Esophagus muscularis mucosa (tissue), 4 donors: ENCODE measurements at regions of chr13 and their contacts with region 1.

Region 1: GRCh38 chr13:59906413-59907049 is 257.2 kb downstream of the DIAPH3 start:
- DNase-seq: no peak
- H3K4me3 ChIP-seq: no peak overlapping the region
- H3K27ac ChIP-seq: no peak overlapping the region
- H3K4me1 ChIP-seq: no peaks in the 10 kb centered on the region
- H3K27me3 ChIP-seq: no peaks in the 10 kb centered on the region
- CTCF ChIP-seq: peak; percentile 48 to 61 (median 57)
- EP300 ChIP-seq: no peak
- POLR2A ChIP-seq: no peak

Region 2: DNA sequence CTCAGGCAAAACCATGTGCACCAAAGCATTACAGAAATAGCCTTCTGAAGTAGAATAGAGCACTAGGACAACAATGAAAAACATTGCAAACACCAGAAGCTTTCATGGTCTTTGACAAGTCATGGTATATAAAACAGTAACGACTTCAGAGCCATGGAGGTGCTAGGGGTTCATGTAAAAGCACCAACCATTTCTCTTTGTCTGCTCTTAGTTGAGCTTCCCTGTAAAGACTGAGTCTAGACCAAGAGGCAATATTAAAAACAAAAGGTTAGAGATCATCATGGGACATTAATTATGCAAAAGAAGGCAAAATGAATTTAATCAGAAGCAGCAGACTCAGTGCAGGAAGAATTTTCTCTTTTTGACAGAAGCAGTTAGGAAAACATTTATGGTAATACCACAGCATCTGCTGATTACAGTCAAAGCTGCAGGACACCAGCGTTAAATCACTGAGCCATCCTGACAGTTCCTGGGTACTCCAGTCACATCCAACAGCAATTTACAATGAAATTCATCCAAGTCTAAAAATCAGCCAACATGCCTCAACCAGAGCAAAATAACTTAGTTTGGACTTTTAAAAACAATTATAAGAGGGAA is 219.6 kb before region 1 on chr13:
- intact Hi-C with region 1: loop called (anchors 5 kb)
- DNase-seq: no peak
- H3K4me3 ChIP-seq: no peak overlapping the region
- H3K27ac ChIP-seq: no peak overlapping the region
- H3K4me1 ChIP-seq: peaks cover 0 to 17% (median 4%) of the 10 kb centered on the region in 4 donors
- H3K27me3 ChIP-seq: no peaks in the 10 kb centered on the region
- CTCF ChIP-seq: no peak
- EP300 ChIP-seq: no peak
- POLR2A ChIP-seq: no peak

Region 3: DNA sequence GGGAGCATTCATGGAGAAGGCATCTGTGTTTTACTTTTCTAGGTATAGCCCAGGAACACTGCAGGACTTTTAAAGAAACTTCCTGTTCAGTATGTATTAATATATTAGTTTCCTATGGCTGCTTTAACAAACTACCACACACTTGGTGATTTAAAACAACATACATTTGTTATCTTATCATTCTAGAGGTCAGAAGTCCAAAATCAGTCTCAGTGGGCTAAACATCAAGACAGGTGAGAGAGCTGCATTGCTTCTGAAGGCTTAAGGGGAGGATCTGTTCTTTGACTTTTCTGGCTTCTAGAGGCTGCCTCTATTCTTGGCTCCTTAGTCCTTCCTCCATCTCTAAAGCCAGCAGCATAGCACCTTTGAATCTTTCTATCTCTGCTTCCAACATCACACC is 294.8 kb after region 1 on chr13:
- intact Hi-C with region 1: no loop called
- DNase-seq: no peak
- H3K4me3 ChIP-seq: no peak overlapping the region
- H3K27ac ChIP-seq: no peak overlapping the region
- H3K4me1 ChIP-seq: no peaks in the 10 kb centered on the region
- H3K27me3 ChIP-seq: no peaks in the 10 kb centered on the region
- CTCF ChIP-seq: no peak
- EP300 ChIP-seq: no peak
- POLR2A ChIP-seq: no peak